Activated CD4-positive, alpha-beta T cell treated with anti-CD3 and anti-CD28 coated beads, Interleukin-2, amount 10 ng/mL, durations not matched to agents 24 days and 14 days (primary cell): ENCODE measurements at regions of chr1 and their contacts with region 1.

Region 1: DNA sequence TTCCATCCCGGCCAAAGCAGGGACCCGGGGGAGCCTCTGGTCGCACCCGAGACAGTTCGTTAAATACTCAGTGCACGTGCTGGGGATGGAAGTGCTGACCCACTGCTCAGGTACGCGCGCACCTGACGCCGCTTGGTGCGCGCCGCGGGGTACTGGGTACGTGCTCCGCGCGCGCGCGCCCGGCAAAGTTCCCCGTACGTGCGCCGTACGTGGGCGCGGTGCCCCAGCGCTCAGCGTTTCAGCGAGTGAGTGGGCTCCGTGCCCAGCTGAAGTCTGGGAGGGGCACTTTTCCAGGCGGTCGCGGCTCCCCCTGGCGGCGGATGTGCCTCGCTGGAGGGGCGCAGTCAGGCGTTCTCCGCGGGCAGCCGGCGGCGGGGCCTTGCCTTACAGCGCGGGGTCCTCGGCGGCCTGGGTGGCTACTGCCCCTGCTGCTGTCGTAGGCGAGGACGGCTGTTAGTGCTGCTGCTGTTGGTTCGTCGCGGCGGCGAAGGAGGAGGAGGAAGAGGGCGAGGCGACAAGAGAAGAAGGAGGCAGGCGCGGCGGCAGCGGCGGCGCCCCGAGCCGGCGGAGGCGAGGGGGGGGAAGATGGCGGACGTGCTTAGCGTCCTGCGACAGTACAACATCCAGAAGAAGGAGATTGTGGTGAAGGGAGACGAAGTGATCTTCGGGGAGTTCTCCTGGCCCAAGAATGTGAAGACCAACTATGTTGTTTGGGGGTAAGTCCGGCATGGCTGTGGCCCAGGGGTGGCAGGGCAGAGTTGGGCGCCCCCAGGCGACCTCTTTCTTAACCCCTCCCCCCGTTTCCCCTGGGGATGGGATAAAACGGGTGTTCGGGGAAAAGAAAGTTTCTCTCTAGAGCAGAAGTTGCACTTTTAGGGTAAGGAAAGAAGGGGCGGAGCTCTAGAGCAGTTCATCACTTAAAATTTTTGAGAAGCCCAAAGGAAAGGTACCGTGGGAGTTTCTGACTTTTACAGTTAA is at the start of gene CDC73:
- DNase-seq: peak; percentile 99
- H3K4me3 Mint-ChIP-seq: peak within 1 kb of the TSS; percentile 100
- H3K27ac Mint-ChIP-seq: peak within 1 kb of the TSS; percentile 95
- H3K4me1 Mint-ChIP-seq: peaks cover 43% of the 10 kb centered on the region
- H3K27me3 Mint-ChIP-seq: peaks cover 10% of the 10 kb centered on the region
- total RNA-seq, gene CDC73: 55.2 and 56.0 TPM in 2 replicates

Region 2: DNA sequence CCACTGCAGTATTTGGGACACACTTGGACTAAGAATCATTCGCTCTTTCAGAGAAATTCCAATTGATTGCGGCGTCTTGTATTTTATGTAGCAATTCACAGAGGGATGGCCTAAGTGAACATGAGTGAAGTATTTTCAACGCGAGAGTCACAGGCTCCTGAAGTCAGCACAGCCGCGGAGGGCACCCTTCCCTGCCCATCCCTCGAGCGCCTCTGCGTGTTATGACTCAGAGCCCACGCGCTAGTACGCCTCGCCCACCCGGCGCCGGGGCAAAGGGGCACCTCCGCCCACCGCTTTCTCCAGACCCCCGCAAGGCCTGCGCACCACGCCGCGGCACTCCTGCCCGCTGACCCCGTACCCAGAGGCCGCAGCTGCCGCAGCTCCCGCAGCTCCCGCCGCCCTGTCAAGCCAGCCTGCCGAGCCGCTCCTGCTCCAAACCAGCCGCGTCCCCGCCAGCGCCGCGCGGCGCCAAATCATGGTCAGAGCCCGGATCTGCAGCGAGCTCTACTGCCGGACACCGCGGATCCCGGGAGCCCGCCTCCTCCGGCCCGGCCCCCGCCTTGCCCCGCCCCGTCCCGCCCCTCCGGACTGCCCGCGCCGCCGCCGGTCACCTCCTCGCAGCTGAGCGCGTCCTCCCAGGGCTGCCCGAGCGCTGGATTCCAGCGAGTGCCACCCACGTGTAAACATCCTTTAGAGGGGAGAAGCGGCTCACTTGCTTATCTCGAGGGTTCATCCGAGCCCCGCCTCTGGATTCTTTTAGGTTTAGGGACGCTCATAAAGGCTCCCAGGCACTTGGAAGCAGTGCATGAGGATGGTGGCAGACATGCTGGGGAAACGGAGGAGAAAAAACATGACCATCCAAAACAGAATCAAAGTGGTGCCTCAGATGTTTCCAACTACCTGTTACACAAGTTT is 16.7 kb before region 1 on chr1 and contains the start of gene GLRX2:
- intact Hi-C with region 1: loop called (anchors 1 kb)
- DNase-seq: peak; percentile 87
- H3K4me3 Mint-ChIP-seq: peak within 1 kb of the TSS; percentile 94
- H3K27ac Mint-ChIP-seq: peak within 1 kb of the TSS; percentile 79
- H3K4me1 Mint-ChIP-seq: peaks cover 20% of the 10 kb centered on the region
- H3K27me3 Mint-ChIP-seq: peaks cover 7% of the 10 kb centered on the region
- total RNA-seq, gene GLRX2: 29.4 and 32.6 TPM in 2 replicates

Region 3: GRCh38 chr1:193141804-193142203 is 19.9 kb after region 1 on chr1:
- intact Hi-C with region 1: loop called (anchors 2 kb)
- DNase-seq: peak; percentile 64
- H3K4me3 Mint-ChIP-seq: no peak overlapping the region
- H3K27ac Mint-ChIP-seq: peak overlapping the region; percentile 27
- H3K4me1 Mint-ChIP-seq: peaks cover 13% of the 10 kb centered on the region
- H3K27me3 Mint-ChIP-seq: no peaks in the 10 kb centered on the region

Region 4: GRCh38 chr1:193338194-193338593 is 216.3 kb after region 1 on chr1:
- intact Hi-C with region 1: no loop called
- DNase-seq: no peak
- H3K4me3 Mint-ChIP-seq: no peak overlapping the region
- H3K27ac Mint-ChIP-seq: no peak overlapping the region
- H3K4me1 Mint-ChIP-seq: no peaks in the 10 kb centered on the region
- H3K27me3 Mint-ChIP-seq: peaks cover 1% of the 10 kb centered on the region